ENCODE measurements at regions of chrX and their contacts with region 1.

Region 1: DNA sequence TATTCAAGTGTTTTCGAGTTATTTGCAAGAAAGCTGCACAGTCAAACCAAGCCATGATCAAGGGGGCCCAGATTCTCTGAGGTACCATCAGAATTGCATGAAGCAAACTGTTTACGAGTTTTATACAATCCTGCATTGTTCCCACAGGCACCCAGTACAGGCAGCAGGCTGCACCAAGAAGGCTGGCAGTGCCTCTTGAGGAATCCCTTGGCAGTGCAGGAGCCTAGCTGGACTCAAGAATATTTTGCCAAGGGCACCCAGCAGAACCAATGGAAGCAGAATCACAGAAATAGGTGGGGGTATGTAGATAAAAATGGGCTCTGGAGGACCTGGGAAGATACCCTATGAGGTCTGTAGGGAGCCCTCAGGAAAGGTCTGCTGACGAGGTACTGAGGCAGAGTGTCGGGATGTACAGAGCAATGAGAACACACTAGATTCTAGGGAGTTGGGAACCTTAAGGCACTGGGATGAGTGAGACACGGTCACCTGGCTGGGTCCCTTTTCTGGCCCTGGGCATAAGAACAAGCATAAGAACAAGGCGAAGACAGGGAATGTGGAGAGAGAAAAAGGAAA is 2.5 kb upstream of the PLP1 start:
- DNase-seq: peak in 4 of 7 donors; percentile 20 to 34 (median 26)
- H3K4me3 ChIP-seq: no peak overlapping the region
- H3K27ac ChIP-seq: no peak overlapping the region
- H3K4me1 ChIP-seq: no peaks in the 10 kb centered on the region
- H3K27me3 ChIP-seq: peaks cover 16% of the 10 kb centered on the region
- CTCF ChIP-seq: peak; percentile 16 to 59 (median 56)
- POLR2A ChIP-seq: no peak

Region 2: GRCh38 chrX:103711533-103712369 is 62.4 kb before region 1 on chrX:
- intact Hi-C with region 1: loop called in 1 of 2 experiments (anchors 10 kb)
- DNase-seq: peak; percentile 23 to 79 (median 48)
- H3K4me3 ChIP-seq: no peak overlapping the region
- H3K27ac ChIP-seq: no peak overlapping the region
- H3K4me1 ChIP-seq: no peaks in the 10 kb centered on the region
- H3K27me3 ChIP-seq: no peaks in the 10 kb centered on the region
- CTCF ChIP-seq: peak; percentile 45 to 65 (median 60)
- POLR2A ChIP-seq: no peak

Region 3: GRCh38 chrX:103817502-103817901 is 43.3 kb after region 1 on chrX:
- intact Hi-C with region 1: no loop called
- DNase-seq: peak in 1 of 7 donors; percentile 20
- H3K4me3 ChIP-seq: no peak overlapping the region
- H3K27ac ChIP-seq: no peak overlapping the region
- H3K4me1 ChIP-seq: no peaks in the 10 kb centered on the region
- H3K27me3 ChIP-seq: peaks cover 5% of the 10 kb centered on the region
- CTCF ChIP-seq: peak; percentile 47 to 93 (median 66)
- POLR2A ChIP-seq: no peak

Measured in adrenal gland (tissue), 19 donors.